CD8-positive, alpha-beta memory T cell (primary cell): ENCODE measurements at regions of chr16 and their contacts with region 1.

Region 1: GRCh38 chr16:53534206-53534605 is 31.2 kb upstream of the AKTIP start:
- DNase-seq: no peak
- H3K4me3 ChIP-seq: no peak overlapping the region
- H3K4me3 Mint-ChIP-seq: peak overlapping the region in 1 of 7 donors; percentile 13
- H3K27ac ChIP-seq: no peak overlapping the region
- H3K27ac Mint-ChIP-seq: peak overlapping the region in 4 of 8 donors; percentile 43 to 81 (median 58)
- H3K4me1 ChIP-seq: peaks cover 23% of the 10 kb centered on the region
- H3K4me1 Mint-ChIP-seq: peaks cover 28 to 43% (median 41%) of the 10 kb centered on the region in 3 donors
- H3K27me3 ChIP-seq: no peaks in the 10 kb centered on the region
- H3K27me3 Mint-ChIP-seq: peaks cover 0 to 2% of the 10 kb centered on the region in 2 donors

Region 2: DNA sequence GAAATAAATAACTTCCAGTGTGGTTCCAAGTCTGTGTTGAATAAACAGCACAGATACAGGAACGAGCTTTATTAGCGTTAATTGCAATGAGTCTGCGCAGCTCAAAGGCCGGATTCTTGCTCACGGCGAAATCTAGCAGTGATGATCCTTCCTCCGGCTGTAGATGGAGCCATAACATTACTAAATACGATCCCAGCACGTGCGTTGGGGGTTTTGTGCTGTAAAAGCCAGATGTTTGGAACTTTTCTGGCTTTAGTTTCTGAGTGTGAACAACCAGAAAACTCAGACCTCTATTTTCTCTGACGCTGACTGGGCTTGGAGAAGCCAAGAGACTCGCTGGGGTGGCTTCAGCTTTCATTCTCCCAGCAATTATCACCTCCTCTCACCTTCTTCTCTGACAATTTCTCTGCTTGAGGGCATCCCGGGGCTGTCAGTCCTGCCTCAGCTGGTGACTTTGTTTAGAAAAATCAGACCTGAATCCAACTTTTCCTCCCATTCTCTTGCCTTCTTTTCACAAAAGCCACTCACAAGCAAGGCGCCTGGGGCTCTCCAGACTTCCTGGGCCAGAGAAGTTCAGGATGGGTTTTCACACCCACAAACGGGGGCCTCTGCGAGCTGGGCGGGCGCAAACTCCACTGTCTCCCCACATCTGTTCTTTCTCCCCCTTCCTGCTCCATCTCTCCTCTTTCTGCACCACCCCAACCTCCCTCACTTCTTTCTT is 15.9 kb after region 1 on chr16:
- CTCF ChIA-PET with region 1: interaction called, 11 read pairs
- POLR2A ChIA-PET with region 1: no interaction called
- DNase-seq: peak; percentile 32 to 64 (median 48)
- H3K4me3 ChIP-seq: no peak overlapping the region
- H3K4me3 Mint-ChIP-seq: no peak overlapping the region
- H3K27ac ChIP-seq: no peak overlapping the region
- H3K27ac Mint-ChIP-seq: peak overlapping the region in 3 of 8 donors; percentile 8 to 91 (median 29)
- H3K4me1 ChIP-seq: peaks cover 25% of the 10 kb centered on the region
- H3K4me1 Mint-ChIP-seq: peaks cover 17 to 41% (median 37%) of the 10 kb centered on the region in 3 donors
- H3K27me3 ChIP-seq: no peaks in the 10 kb centered on the region
- H3K27me3 Mint-ChIP-seq: peaks cover 1 to 5% of the 10 kb centered on the region in 2 donors